Vagina (tissue), 2 donors: ENCODE measurements at regions of chr1 and their contacts with region 1.

Region 1: GRCh38 chr1:21077085-21077484 is 99.6 kb downstream of the EIF4G3 start:
- DNase-seq: no peak
- H3K4me3 ChIP-seq: no peak overlapping the region
- H3K27ac ChIP-seq: no peak overlapping the region
- H3K4me1 ChIP-seq: peaks cover 16% of the 10 kb centered on the region
- H3K27me3 ChIP-seq: no peaks in the 10 kb centered on the region
- CTCF ChIP-seq: no peak
- POLR2A ChIP-seq: no peak

Region 2: GRCh38 chr1:19921310-19921709 is 1155.8 kb before region 1 on chr1:
- intact Hi-C with region 1: no loop called
- DNase-seq: no peak
- H3K4me3 ChIP-seq: no peak overlapping the region
- H3K27ac ChIP-seq: no peak overlapping the region
- H3K4me1 ChIP-seq: no peaks in the 10 kb centered on the region
- H3K27me3 ChIP-seq: no peaks in the 10 kb centered on the region
- CTCF ChIP-seq: no peak
- POLR2A ChIP-seq: no peak

Region 3: GRCh38 chr1:20964540-20965484 is 112.3 kb before region 1 on chr1:
- intact Hi-C with region 1: no loop called
- DNase-seq: no peak
- H3K4me3 ChIP-seq: no peak overlapping the region
- H3K27ac ChIP-seq: no peak overlapping the region
- H3K4me1 ChIP-seq: peaks cover 8% of the 10 kb centered on the region
- H3K27me3 ChIP-seq: no peaks in the 10 kb centered on the region
- CTCF ChIP-seq: no peak
- POLR2A ChIP-seq: no peak

Region 4: GRCh38 chr1:21355956-21356355 is 278.9 kb after region 1 on chr1:
- intact Hi-C with region 1: no loop called
- DNase-seq: no peak
- H3K4me3 ChIP-seq: no peak overlapping the region
- H3K27ac ChIP-seq: no peak overlapping the region
- H3K4me1 ChIP-seq: no peaks in the 10 kb centered on the region
- H3K27me3 ChIP-seq: no peaks in the 10 kb centered on the region
- CTCF ChIP-seq: no peak
- POLR2A ChIP-seq: no peak

Region 5: DNA sequence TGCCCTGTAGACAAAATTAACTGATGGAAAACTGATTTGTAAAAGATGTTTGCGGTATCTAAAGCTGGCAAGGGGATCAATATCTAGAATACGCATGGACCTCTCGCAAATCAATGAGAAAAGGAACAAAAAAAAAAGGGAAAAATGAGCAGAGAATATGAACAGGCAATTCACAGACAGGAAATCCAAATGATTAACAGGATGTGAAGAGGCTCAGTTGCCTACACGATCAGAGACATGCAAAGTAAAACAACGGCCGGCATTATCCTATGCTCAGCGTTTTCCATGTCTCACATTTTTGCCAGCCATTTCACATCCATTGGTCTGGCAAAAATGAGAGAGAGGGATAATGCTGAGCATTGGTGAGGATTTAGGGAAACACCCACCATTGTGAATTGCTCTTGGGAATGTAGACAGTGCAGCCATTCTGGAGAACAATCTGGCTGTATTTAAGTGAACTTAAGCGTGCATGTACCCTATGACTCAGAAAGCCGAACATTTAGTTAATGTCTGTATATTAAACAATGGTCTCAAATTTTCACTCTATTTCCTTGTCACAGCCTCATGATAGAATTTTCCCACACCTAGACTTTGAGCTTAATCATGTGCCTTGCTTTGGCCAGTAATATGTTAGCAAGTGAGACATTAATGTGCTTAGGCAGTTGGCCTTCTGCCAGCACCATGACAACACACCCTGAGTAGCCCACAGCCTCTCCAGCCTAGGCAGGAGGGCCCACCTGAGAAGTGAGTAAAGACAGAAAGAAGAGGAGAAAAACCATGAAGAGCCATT is 301.8 kb after region 1 on chr1:
- intact Hi-C with region 1: loop called (anchors 10 kb)
- DNase-seq: no peak
- H3K4me3 ChIP-seq: no peak overlapping the region
- H3K27ac ChIP-seq: no peak overlapping the region
- H3K4me1 ChIP-seq: no peaks in the 10 kb centered on the region
- H3K27me3 ChIP-seq: no peaks in the 10 kb centered on the region
- CTCF ChIP-seq: no peak
- POLR2A ChIP-seq: no peak